ENCODE measurements at regions of chr13 and their contacts with region 1.

Region 1: GRCh38 chr13:46202188-46202795 is 9.4 kb upstream of the LRRC63 start:
- DNase-seq: peak in 3 of 14 experiments; percentile 37 to 75 (median 41)
- ATAC-seq: peak; percentile 84
- H3K4me3 ChIP-seq: no peak overlapping the region
- H3K4me3 Mint-ChIP-seq: peak overlapping the region; percentile 60
- H3K27ac ChIP-seq: peak overlapping the region in 1 of 2 donors; percentile 30
- H3K27ac Mint-ChIP-seq: peak overlapping the region; percentile 81
- H3K4me1 ChIP-seq: peaks cover 26% of the 10 kb centered on the region
- H3K4me1 Mint-ChIP-seq: peaks cover 45% of the 10 kb centered on the region
- H3K27me3 ChIP-seq: no peaks in the 10 kb centered on the region
- H3K27me3 Mint-ChIP-seq: no peaks in the 10 kb centered on the region
- CTCF ChIP-seq: no peak

Region 2: GRCh38 chr13:45456196-45456972 is 745.9 kb before region 1 on chr13:
- CTCF ChIA-PET with region 1: no interaction called
- POLR2A ChIA-PET with region 1: no interaction called
- intact Hi-C with region 1: loop called in 1 of 2 experiments (anchors 5 kb)
- DNase-seq: no peak
- ATAC-seq: no peak
- H3K4me3 ChIP-seq: no peak overlapping the region
- H3K4me3 Mint-ChIP-seq: no peak overlapping the region
- H3K27ac ChIP-seq: no peak overlapping the region
- H3K27ac Mint-ChIP-seq: no peak overlapping the region
- H3K4me1 ChIP-seq: no peaks in the 10 kb centered on the region
- H3K4me1 Mint-ChIP-seq: no peaks in the 10 kb centered on the region
- H3K27me3 ChIP-seq: no peaks in the 10 kb centered on the region
- H3K27me3 Mint-ChIP-seq: no peaks in the 10 kb centered on the region
- CTCF ChIP-seq: no peak